ENCODE measurements at regions of chr5 and their contacts with region 1.

Region 1: GRCh38 chr5:95664204-95664786 is 17.7 kb downstream of the RFESD start:
- DNase-seq: no peak
- H3K4me3 Mint-ChIP-seq: no peak overlapping the region
- H3K27ac Mint-ChIP-seq: no peak overlapping the region
- H3K4me1 Mint-ChIP-seq: no peaks in the 10 kb centered on the region
- H3K27me3 Mint-ChIP-seq: peaks cover 16% of the 10 kb centered on the region

Region 2: DNA sequence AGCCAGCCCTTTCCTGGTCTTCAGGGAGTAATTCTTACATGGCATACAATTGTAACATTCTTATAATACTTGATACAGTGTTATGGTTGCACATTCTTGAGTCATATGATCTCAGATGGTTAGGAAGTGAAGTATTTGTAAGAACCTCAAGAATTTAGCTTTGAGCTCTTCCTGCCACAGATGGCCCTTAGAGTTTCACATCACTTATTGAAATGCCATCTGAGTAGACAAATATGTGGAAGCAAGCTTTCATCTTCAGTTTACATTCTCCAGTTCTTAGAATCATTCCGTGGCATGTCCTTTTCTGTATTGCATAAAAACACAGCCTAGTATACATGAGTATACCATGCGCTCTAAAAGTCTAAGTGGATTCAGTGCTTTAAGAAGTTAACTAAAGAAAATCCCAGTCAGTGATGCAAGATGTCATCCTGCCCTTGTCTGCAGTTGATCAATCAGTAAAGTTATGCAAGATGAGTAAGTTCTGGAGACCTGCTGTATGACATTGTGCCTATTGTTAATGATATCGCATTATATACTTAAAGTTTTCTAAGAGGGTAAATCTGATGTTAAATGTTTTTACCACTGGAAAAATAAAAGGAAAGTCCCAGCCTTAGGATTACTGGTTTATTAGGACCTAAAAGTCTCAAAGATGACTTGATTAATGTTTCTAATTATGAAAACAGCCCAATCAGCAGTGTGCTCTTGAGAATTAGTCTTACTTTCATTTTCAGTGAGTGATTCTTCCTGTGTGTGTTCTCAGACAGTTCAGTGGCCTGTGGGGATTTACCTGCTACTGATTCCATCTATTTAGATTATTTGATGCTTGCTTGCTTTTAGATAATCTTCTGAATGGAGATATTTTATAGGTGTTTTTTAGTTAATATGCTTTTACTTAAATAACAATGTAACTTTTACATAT is 96.2 kb after region 1 on chr5:
- intact Hi-C with region 1: loop called (anchors 5 kb)
- DNase-seq: no peak
- H3K4me3 Mint-ChIP-seq: peak overlapping the region; percentile 52
- H3K27ac Mint-ChIP-seq: peak overlapping the region; percentile 45
- H3K4me1 Mint-ChIP-seq: peaks cover 30% of the 10 kb centered on the region
- H3K27me3 Mint-ChIP-seq: peaks cover 22% of the 10 kb centered on the region

Region 3: DNA sequence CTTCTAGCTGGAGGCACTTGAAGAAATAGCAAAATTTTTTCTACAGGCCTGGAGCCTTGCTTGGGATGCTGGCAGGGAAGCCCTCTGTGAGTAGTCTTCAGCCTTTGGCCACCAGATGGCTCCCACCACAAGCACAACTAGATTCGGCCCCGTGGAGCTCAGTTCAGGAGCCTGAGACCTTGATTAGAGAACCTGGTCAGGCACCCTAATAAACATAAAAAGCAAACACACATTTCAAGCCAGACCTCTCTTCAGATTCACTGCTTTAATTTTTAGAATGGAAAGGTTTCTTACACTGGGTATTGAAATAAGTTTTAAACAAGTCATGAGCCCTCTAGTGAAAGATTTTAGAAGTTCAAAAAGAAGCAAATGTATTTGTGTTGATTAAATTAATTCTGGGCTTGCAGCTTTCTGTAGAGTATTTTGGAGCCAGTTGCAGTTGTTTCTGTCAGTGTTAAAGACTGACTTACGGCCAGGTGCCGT is 116.8 kb after region 1 on chr5:
- intact Hi-C with region 1: loop called (anchors 1 kb)
- DNase-seq: peak; percentile 47
- H3K4me3 Mint-ChIP-seq: peak overlapping the region; percentile 56
- H3K27ac Mint-ChIP-seq: peak overlapping the region; percentile 29
- H3K4me1 Mint-ChIP-seq: peaks cover 22% of the 10 kb centered on the region
- H3K27me3 Mint-ChIP-seq: peaks cover 2% of the 10 kb centered on the region

Region 4: GRCh38 chr5:95846554-95847260 is 182.4 kb after region 1 on chr5:
- intact Hi-C with region 1: loop called (anchors 1 kb)
- DNase-seq: peak; percentile 44
- H3K4me3 Mint-ChIP-seq: no peak overlapping the region
- H3K27ac Mint-ChIP-seq: no peak overlapping the region
- H3K4me1 Mint-ChIP-seq: peaks cover 37% of the 10 kb centered on the region
- H3K27me3 Mint-ChIP-seq: peaks cover 12% of the 10 kb centered on the region

Measured in activated T-helper 1 cell treated with anti-CD3 and anti-CD28 coated beads, Interleukin-12 subunit alpha, Interleukin-12 subunit beta, Interleukin-2, Interleukin-4 antibody, amounts not matched to agents 30 ng/mL and 10 ng/mL and 1 ng/mL, durations not matched to agents 14 hours and 24 hours and 36 hours (primary cell).